ENCODE measurements at regions of chr10 and their contacts with region 1.

Region 1: DNA sequence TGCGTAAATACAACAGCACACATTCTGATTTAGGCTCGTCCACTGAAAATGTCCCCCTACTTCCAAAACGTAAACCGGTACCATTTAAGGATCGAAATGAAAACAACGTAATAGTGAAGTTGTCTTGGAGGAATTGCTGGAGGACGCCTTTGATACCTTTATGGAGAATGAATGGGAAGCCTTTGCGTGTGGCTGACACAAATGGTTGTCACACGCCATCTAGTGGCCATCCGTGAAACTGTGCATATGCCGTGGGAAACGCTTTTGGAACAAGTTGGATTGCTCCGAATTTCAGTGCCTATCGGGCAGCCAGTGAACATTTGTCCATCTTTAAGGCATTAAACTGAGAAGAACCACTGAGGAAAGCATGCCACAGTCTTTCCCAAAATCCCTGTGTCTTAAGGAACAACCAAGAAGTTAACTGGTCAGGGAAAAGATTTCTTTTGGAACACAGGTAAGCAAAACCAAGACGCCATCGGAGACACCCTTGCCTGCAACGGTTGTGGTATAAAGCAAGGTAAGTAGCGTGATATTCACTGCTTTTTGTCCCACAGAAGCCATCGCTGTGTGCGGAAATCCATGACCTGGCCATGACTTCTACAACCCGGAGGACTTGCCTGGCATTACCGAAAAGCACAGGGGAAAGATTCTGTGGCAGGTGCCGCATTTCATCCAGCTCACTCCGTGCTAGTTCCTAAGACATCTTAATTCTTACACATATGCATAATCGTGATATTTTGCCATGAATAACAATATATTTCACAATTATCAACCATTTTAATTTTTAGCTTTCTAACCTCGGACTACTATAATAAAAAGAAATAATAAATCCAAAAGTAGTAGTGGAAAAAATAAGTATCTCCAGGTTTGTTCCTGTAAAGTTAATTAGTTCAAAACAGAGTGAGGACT is 100.6 kb downstream of the FAM204A start:
- DNase-seq: peak; percentile 82
- H3K4me3 ChIP-seq: no peak overlapping the region
- H3K27ac ChIP-seq: no peak overlapping the region
- H3K4me1 ChIP-seq: no peaks in the 10 kb centered on the region
- H3K27me3 ChIP-seq: peaks cover 93% of the 10 kb centered on the region
- CTCF ChIP-seq: peak; percentile 90

Region 2: GRCh38 chr10:117216611-117217195 is 1024.8 kb before region 1 on chr10:
- CTCF ChIA-PET with region 1: no interaction called
- POLR2A ChIA-PET with region 1: no interaction called
- intact Hi-C with region 1: loop called (anchors 5 kb)
- DNase-seq: peak; percentile 80
- H3K4me3 ChIP-seq: peak overlapping the region; percentile 41
- H3K27ac ChIP-seq: no peak overlapping the region
- H3K4me1 ChIP-seq: peaks cover 13% of the 10 kb centered on the region
- H3K27me3 ChIP-seq: peaks cover 21% of the 10 kb centered on the region
- CTCF ChIP-seq: peak; percentile 100

Region 3: DNA sequence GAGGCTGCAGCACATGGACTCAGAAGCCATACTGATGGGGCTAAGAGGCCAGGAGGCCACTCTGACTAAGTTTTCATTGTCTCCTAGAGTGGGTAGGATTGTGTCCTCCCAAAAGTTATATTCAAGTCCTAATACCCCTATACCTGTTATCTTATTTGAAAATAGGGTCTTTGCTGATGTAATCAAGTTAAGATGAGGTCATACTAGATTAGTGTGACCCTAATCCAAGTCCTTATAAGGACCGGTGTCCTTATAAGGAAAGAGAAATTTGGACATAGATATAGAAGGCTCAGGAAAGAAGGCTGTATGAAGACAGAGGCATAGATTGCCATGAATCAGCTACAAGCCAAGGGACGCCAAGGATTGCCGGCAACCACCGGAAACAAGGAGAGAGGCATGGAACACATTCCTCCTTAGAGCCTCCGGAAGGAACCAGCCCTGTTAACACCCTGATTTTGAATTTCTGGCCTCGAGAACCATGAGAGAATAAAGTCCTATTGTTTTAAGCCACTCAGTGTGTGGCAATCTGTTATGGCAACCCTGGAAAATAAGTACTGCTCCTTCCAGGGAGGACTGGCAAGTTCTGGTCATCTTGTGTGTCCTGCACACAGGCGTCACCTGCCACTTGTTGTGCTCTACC is 541.9 kb before region 1 on chr10:
- CTCF ChIA-PET with region 1: no interaction called
- POLR2A ChIA-PET with region 1: no interaction called
- intact Hi-C with region 1: loop called (anchors 10 kb)
- DNase-seq: no peak
- H3K4me3 ChIP-seq: no peak overlapping the region
- H3K27ac ChIP-seq: no peak overlapping the region
- H3K4me1 ChIP-seq: no peaks in the 10 kb centered on the region
- H3K27me3 ChIP-seq: peaks cover 22% of the 10 kb centered on the region
- CTCF ChIP-seq: no peak

Region 4: DNA sequence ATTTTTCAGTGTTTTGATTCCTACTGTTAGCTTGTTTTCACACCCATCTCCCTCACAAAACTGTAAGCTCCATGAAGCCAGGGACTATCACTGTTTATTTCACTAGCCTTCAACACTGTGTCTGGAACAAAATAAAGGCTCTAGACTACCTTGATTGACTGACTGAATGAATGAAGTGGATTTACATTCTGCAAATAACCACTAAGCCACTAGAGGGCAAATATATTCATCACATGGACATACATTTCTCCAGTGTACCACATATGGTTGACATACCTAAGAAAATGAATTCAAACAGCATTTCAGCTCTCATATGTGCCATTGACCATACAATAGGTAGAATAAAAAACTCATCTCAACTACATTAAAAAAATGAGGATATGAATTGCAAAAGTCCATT is 380.7 kb before region 1 on chr10:
- CTCF ChIA-PET with region 1: no interaction called
- POLR2A ChIA-PET with region 1: no interaction called
- intact Hi-C with region 1: loop called (anchors 10 kb)
- DNase-seq: peak; percentile 27
- H3K4me3 ChIP-seq: no peak overlapping the region
- H3K27ac ChIP-seq: no peak overlapping the region
- H3K4me1 ChIP-seq: no peaks in the 10 kb centered on the region
- H3K27me3 ChIP-seq: peaks cover 43% of the 10 kb centered on the region
- CTCF ChIP-seq: peak; percentile 61

Region 5: GRCh38 chr10:118076705-118077104 is 164.8 kb before region 1 on chr10:
- CTCF ChIA-PET with region 1: no interaction called
- POLR2A ChIA-PET with region 1: no interaction called
- intact Hi-C with region 1: no loop called
- DNase-seq: no peak
- H3K4me3 ChIP-seq: no peak overlapping the region
- H3K27ac ChIP-seq: no peak overlapping the region
- H3K4me1 ChIP-seq: no peaks in the 10 kb centered on the region
- H3K27me3 ChIP-seq: peaks cover 11% of the 10 kb centered on the region
- CTCF ChIP-seq: no peak

Region 6: DNA sequence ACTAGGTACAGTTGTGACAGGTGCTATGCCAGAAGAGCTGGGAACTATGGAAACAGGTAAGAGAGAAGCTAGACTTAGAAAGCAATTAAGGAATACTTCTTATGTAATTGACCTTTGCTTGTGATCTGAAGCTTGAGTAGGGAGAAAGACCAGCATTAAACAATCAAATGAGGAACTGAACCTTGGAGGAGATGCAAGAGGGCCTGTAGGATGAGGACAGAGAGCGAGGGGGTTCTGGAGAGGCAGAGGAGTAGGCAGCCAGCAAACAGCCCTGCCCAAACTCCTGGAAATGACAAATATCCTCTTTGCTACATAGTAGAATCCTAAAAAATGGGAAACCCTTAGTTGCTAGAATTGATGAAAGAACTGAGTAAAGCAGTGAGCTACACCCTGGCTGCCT is 142.2 kb after region 1 on chr10:
- CTCF ChIA-PET with region 1: no interaction called
- POLR2A ChIA-PET with region 1: no interaction called
- intact Hi-C with region 1: no loop called
- DNase-seq: no peak
- H3K4me3 ChIP-seq: no peak overlapping the region
- H3K27ac ChIP-seq: no peak overlapping the region
- H3K4me1 ChIP-seq: no peaks in the 10 kb centered on the region
- H3K27me3 ChIP-seq: peaks cover 26% of the 10 kb centered on the region
- CTCF ChIP-seq: no peak

Measured in A673 (cell line).